CD4-positive, alpha-beta T cell (primary cell): ENCODE measurements at regions of chr18 and their contacts with region 1.

Region 1: DNA sequence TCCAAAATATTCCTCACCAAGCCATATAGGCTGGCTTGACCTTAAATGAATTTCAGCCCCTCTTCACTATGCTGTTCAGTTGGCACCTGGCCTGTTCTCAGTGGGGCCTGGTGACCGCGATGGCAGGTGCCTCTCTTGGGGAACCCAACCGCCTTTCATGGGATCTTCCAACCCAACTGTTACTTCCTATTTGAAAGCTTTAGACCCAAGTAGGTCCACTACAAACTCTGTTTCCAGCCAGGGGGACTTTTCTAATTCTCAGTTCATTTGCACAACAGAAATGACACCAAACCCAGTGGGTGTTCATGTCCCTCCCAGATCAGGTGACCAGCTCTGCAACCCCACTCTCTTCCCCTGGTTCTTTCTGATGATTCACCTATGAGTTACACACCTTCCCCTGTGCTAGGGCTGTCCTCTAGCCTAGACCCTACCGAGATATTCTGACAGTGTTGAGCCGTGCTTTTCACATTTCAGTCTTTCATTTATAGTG is 35.6 kb upstream of the NDUFV2 start:
- DNase-seq: peak in 1 of 14 experiments; percentile 43
- ATAC-seq: no peak
- H3K4me3 ChIP-seq: no peak overlapping the region
- H3K4me3 Mint-ChIP-seq: no peak overlapping the region
- H3K27ac ChIP-seq: no peak overlapping the region
- H3K27ac Mint-ChIP-seq: no peak overlapping the region
- H3K4me1 ChIP-seq: peaks cover 3% of the 10 kb centered on the region
- H3K4me1 Mint-ChIP-seq: no peaks in the 10 kb centered on the region
- H3K27me3 ChIP-seq: no peaks in the 10 kb centered on the region
- H3K27me3 Mint-ChIP-seq: peaks cover 4% of the 10 kb centered on the region
- CTCF ChIP-seq: no peak

Region 2: DNA sequence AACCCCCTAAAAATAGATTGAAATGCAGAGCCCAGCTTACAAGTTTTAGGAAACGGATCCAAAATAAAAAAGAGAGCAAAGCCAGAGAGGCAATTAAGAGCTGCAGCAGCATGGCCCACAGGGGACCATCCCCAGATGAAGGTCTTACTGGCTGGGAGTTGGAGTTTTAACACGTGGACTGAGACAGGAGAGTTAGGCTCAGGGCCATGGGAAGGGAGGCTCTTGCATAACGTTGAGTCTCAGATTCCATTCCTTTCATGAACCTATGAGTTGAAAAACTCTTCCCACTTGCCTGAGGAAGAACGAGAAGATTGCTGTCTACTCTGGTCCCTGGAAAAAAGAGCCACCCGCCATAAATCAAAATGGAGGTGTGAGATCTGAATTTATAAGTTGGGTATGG is 66.1 kb before region 1 on chr18:
- CTCF ChIA-PET with region 1: no interaction called
- POLR2A ChIA-PET with region 1: no interaction called
- intact Hi-C with region 1: loop called in 1 of 2 experiments (anchors 10 kb)
- DNase-seq: no peak
- ATAC-seq: no peak
- H3K4me3 ChIP-seq: no peak overlapping the region
- H3K4me3 Mint-ChIP-seq: no peak overlapping the region
- H3K27ac ChIP-seq: no peak overlapping the region
- H3K27ac Mint-ChIP-seq: no peak overlapping the region
- H3K4me1 ChIP-seq: no peaks in the 10 kb centered on the region
- H3K4me1 Mint-ChIP-seq: no peaks in the 10 kb centered on the region
- H3K27me3 ChIP-seq: peaks cover 5% of the 10 kb centered on the region in 2 experiments
- H3K27me3 Mint-ChIP-seq: peaks cover 24% of the 10 kb centered on the region
- CTCF ChIP-seq: no peak

Region 3: GRCh38 chr18:9025091-9025838 is 41.6 kb before region 1 on chr18:
- CTCF ChIA-PET with region 1: no interaction called
- POLR2A ChIA-PET with region 1: no interaction called
- intact Hi-C with region 1: no loop called
- DNase-seq: no peak
- ATAC-seq: no peak
- H3K4me3 ChIP-seq: no peak overlapping the region
- H3K4me3 Mint-ChIP-seq: no peak overlapping the region
- H3K27ac ChIP-seq: no peak overlapping the region
- H3K27ac Mint-ChIP-seq: no peak overlapping the region
- H3K4me1 ChIP-seq: no peaks in the 10 kb centered on the region
- H3K4me1 Mint-ChIP-seq: no peaks in the 10 kb centered on the region
- H3K27me3 ChIP-seq: peaks cover 0 to 4% of the 10 kb centered on the region in 2 experiments
- H3K27me3 Mint-ChIP-seq: no peaks in the 10 kb centered on the region
- CTCF ChIP-seq: no peak

Region 4: DNA sequence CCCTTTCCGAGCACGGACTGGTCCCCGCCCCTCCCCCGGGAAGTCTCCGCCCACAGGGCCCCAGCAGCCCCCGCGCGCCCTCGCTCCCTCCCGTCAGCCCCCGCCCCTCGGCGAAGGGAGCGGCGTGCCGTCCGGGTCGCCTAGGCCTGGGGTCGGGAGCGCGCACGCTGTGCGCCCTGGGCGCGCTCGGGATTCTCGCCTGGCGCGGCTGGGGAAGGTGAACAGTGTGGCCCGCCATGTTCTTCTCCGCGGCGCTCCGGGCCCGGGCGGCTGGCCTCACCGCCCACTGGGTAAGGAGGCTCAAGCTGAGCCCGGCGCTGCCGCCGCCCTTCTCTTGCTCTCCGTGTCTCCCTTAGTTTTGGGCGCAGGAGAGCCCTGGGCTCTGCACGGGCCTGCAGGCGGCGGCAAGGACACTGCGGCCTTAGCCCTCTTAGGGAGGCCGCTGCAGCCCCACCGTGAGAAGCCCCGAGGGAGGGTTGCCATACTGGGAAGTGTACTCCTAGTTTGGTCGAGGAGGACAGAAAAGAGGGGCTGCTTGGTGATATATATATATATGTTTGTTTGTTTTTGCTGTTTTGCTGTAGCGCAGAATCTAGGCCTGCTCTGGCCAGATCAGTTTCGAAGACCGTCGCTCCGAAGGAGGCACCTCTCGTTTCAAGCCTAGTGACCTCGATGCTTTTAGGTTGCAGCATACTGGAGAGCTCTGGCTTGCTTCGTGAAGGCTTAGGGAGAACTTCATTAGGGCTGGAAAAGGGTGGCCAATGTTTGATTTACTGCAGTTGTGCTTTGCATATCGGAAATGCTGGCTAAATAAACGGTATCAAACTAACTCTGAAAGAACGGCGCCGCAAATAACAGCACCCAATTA is 35.9 kb after region 1 on chr18 and contains the start of gene NDUFV2:
- CTCF ChIA-PET with region 1: interaction called, 26 read pairs
- POLR2A ChIA-PET with region 1: interaction called, 3 read pairs
- intact Hi-C with region 1: loop called in 1 of 2 experiments (anchors 2 kb)
- DNase-seq: peak; percentile 93 to 99 (median 98)
- ATAC-seq: peak; percentile 87
- H3K4me3 ChIP-seq: peak within 1 kb of the TSS; percentile 74
- H3K4me3 Mint-ChIP-seq: peak within 1 kb of the TSS; percentile 95
- H3K27ac ChIP-seq: peak within 1 kb of the TSS; percentile 82 to 91
- H3K27ac Mint-ChIP-seq: peak within 1 kb of the TSS; percentile 90
- H3K4me1 ChIP-seq: peaks cover 22% of the 10 kb centered on the region
- H3K4me1 Mint-ChIP-seq: peaks cover 65% of the 10 kb centered on the region
- H3K27me3 ChIP-seq: no peaks in the 10 kb centered on the region
- H3K27me3 Mint-ChIP-seq: no peaks in the 10 kb centered on the region
- CTCF ChIP-seq: no peak
- total RNA-seq, gene NDUFV2: 230 to 231 TPM

Region 5: DNA sequence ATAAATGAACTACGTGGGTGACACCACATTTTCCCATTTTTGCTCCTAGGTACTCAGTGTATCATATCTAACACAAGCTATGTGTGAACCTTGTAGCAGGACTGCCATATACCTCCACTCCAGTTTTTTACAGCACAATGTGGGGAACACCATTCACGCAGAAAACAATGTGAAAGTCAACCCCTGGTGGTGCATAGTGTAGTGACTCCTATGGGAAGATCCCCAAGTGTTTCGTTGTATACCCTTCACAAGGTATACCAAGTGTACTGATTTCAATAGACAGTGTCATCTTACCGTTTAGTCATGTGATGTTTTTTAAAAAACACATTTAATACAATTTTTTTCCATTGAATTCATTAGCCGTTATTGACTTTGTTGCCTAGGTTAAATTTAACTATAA is 137.8 kb after region 1 on chr18:
- CTCF ChIA-PET with region 1: interaction called, 3 read pairs
- POLR2A ChIA-PET with region 1: no interaction called
- intact Hi-C with region 1: loop called in 1 of 2 experiments (anchors 5 kb)
- DNase-seq: no peak
- ATAC-seq: no peak
- H3K4me3 ChIP-seq: no peak overlapping the region
- H3K4me3 Mint-ChIP-seq: no peak overlapping the region
- H3K27ac ChIP-seq: no peak overlapping the region
- H3K27ac Mint-ChIP-seq: peak overlapping the region; percentile 56
- H3K4me1 ChIP-seq: no peaks in the 10 kb centered on the region
- H3K4me1 Mint-ChIP-seq: peaks cover 20% of the 10 kb centered on the region
- H3K27me3 ChIP-seq: no peaks in the 10 kb centered on the region
- H3K27me3 Mint-ChIP-seq: no peaks in the 10 kb centered on the region
- CTCF ChIP-seq: no peak

Region 6: DNA sequence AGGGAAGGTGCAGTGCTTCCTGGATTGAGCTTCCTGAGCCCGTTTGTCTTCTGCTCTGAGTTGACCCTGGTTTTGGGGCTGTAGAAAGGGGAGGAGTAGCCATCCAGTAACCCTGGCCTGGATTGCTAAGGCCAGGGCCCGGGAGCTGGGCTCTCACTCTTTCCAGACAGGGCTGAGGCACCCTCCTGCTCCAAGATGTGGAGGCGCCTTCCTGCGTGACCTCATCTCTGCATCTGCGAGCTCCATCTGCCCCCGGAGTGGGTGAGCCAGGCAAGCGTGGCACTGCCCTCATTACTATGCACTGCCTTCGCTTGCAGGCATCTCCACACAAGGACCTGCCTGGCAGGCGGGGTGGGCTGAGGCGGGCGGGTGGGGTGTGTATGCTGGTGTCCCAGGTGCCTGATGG is 699.2 kb after region 1 on chr18:
- CTCF ChIA-PET with region 1: no interaction called
- POLR2A ChIA-PET with region 1: no interaction called
- intact Hi-C with region 1: no loop called
- DNase-seq: no peak
- ATAC-seq: no peak
- H3K4me3 ChIP-seq: no peak overlapping the region
- H3K4me3 Mint-ChIP-seq: no peak overlapping the region
- H3K27ac ChIP-seq: no peak overlapping the region
- H3K27ac Mint-ChIP-seq: no peak overlapping the region
- H3K4me1 ChIP-seq: no peaks in the 10 kb centered on the region
- H3K4me1 Mint-ChIP-seq: no peaks in the 10 kb centered on the region
- H3K27me3 ChIP-seq: peaks cover 0 to 3% of the 10 kb centered on the region in 2 experiments
- H3K27me3 Mint-ChIP-seq: no peaks in the 10 kb centered on the region
- CTCF ChIP-seq: no peak